Psoas muscle (tissue), 8 donors: ENCODE measurements at regions of chr1 and their contacts with region 1.

Region 1: GRCh38 chr1:28886731-28887418 is 27.5 kb upstream of the EPB41 start:
- DNase-seq: peak; percentile 84 to 92
- ATAC-seq: peak; percentile 84 to 90 (median 86)
- H3K4me3 ChIP-seq: peak overlapping the region; percentile 99
- H3K27ac ChIP-seq: peak overlapping the region; percentile 94
- H3K4me1 ChIP-seq: peaks cover 18% of the 10 kb centered on the region
- H3K27me3 ChIP-seq: no peaks in the 10 kb centered on the region
- CTCF ChIP-seq: no peak

Region 2: DNA sequence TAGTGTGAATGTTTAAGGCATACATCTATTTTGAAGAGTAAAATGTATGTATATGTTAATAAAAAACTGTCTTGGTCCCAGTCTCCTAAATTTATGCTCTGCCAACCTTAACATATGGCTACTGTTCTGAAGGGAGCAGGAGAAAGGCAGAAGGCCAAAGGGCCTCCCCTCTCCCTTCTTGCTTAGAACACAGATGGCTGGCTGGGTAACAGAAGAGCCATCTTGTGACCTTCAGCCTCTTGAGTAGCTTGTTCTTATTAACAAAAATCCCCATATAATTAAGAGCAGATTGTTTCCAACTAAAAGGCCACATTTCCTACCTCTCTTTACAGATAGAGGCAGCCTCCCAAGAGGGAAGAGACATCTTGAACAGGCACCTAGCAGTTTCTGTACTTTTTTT is 63.6 kb after region 1 on chr1:
- intact Hi-C with region 1: no loop called
- DNase-seq: no peak
- ATAC-seq: no peak
- H3K4me3 ChIP-seq: no peak overlapping the region
- H3K27ac ChIP-seq: no peak overlapping the region
- H3K4me1 ChIP-seq: peaks cover 6% of the 10 kb centered on the region
- H3K27me3 ChIP-seq: no peaks in the 10 kb centered on the region
- CTCF ChIP-seq: no peak

Region 3: DNA sequence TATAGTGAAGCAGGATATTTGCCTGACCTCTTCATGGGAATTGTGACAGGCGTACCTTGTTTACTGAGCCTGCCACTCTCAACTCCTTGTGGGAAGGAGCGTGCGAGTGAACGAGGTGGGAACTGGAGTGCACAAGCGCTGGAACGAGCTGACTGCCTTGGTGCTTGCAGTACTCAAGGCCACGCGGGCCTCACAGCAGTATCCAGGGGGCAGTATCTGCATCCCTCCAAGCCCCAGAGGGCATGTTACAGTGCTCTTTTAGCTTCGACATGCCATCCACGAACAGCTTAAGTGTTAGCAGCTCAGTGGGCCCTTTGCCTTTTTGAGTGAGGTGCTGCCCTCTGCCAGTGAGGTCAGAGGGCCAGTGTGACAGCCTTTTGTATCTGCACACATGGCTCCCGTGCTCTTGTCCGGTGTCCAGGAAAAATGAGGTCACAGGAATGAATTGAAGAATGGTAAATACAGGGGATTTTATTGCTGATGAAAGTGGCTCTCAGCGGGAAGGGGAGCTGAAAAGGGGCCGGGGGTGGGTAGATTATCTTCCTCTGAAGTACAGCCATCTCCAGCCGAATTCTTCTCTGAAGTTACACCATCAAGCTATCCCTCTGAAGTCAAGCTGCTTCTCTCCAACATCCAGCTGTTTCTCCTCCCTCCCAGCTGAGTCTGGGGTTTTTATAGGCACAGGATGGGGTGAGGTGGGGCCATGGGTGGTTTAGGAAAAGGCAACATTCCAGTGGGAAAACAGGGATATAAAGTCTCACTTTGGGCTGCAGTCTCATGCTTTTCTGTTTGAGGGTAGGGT is 96.8 kb after region 1 on chr1:
- intact Hi-C with region 1: loop called in 1 of 2 experiments (anchors 5 kb)
- DNase-seq: peak; percentile 31 to 55
- ATAC-seq: peak; percentile 59 to 86 (median 80)
- H3K4me3 ChIP-seq: no peak overlapping the region
- H3K27ac ChIP-seq: peak overlapping the region; percentile 52
- H3K4me1 ChIP-seq: peaks cover 34% of the 10 kb centered on the region
- H3K27me3 ChIP-seq: no peaks in the 10 kb centered on the region
- CTCF ChIP-seq: peak; percentile 21

Region 4: GRCh38 chr1:29033829-29034466 is 147.1 kb after region 1 on chr1:
- intact Hi-C with region 1: loop called (anchors 1 to 2 kb)
- DNase-seq: no peak
- ATAC-seq: peak; percentile 75 to 90 (median 79)
- H3K4me3 ChIP-seq: no peak overlapping the region
- H3K27ac ChIP-seq: no peak overlapping the region
- H3K4me1 ChIP-seq: no peaks in the 10 kb centered on the region
- H3K27me3 ChIP-seq: no peaks in the 10 kb centered on the region
- CTCF ChIP-seq: peak; percentile 78

Region 5: DNA sequence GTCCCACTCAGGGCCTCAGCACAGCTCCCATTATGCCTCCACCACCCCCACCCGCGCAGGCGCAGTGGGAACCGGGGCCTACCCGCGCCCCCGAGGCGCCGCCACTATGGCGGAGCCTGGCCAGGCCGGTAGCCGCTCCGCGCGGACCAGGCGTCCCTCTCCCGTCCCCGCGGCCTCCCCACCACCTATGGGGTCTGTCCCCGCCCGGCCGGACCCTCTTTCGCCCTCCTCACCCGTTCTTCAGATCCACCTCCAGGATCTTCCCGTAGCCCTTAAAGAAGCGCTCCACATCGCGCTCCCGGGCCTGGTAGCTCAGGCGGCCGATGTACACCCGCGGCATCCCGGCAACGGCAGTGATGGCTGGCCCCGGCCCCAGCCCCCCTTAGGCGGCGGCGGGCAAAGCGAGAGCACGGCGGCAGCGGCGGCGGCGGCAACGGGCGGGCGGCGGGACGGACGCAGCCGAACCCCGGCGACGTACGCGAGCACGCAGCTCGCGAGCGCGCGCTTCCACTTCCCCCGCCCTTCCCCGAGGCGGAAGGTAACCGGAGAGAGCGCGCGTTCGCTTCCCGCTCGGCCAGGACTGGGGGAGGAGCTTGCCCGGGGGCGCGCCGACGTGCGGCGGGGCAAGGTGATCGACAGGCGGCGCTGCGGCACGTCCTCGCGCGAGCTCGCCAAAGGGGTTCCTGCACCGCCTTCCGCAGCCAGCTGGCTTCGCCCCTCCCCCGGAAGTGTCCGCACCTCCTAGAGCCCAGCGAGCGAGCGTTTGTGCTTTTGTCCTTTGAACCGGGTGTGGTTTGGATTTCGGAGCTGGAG is 294.7 kb after region 1 on chr1 and contains the start of gene SRSF4:
- intact Hi-C with region 1: loop called in 1 of 2 experiments (anchors 5 kb)
- DNase-seq: peak; percentile 99 to 100
- ATAC-seq: peak; percentile 93 to 96 (median 95)
- H3K4me3 ChIP-seq: peak within 1 kb of the TSS; percentile 97
- H3K27ac ChIP-seq: peak within 1 kb of the TSS; percentile 100
- H3K4me1 ChIP-seq: peaks cover 43% of the 10 kb centered on the region
- H3K27me3 ChIP-seq: no peaks in the 10 kb centered on the region
- CTCF ChIP-seq: peak; percentile 60
- total RNA-seq, gene SRSF4: 49.3 to 80.4 (median 66.8) TPM

Region 6: GRCh38 chr1:29202584-29203340 is 315.9 kb after region 1 on chr1:
- intact Hi-C with region 1: loop called (anchors 1 to 2 kb)
- DNase-seq: peak; percentile 94 to 97
- ATAC-seq: peak; percentile 97 to 98 (median 98)
- H3K4me3 ChIP-seq: no peak overlapping the region
- H3K27ac ChIP-seq: peak overlapping the region; percentile 80
- H3K4me1 ChIP-seq: peaks cover 11% of the 10 kb centered on the region
- H3K27me3 ChIP-seq: no peaks in the 10 kb centered on the region
- CTCF ChIP-seq: peak; percentile 98